Psoas muscle (tissue), 8 donors: ENCODE measurements at regions of chr14 and their contacts with region 1.

Region 1: DNA sequence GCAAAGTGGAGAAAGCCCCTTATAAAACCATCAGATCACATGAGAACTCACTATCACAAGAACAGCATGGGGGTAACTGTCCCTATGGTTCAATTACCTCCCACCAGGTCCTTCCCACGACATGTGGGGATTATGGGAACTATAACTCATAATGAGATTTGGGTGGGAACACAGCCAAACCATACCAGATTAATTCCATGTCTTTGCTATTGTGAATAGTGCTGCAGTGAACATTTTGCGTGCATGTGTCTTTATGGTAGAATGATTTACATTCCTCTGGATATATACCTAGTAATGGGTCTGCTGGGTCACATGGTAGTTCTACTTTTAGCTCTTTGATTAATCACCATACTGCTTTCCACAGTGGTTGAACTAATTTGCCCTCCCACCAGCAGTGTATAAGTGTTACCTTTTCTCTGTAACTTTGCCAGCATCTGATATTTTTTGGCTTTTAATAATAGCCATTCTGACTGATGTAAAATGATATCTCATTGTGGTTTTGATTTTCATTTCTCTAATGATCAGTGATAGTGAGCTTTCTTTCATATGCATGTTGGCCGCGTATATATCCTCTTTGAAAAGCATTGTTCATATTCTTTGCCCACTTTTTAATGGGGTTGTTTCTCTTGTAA is 29.7 kb upstream of the SAV1 start:
- DNase-seq: no peak
- ATAC-seq: no peak
- H3K4me3 ChIP-seq: no peak overlapping the region
- H3K27ac ChIP-seq: no peak overlapping the region
- H3K4me1 ChIP-seq: no peaks in the 10 kb centered on the region
- H3K27me3 ChIP-seq: no peaks in the 10 kb centered on the region
- CTCF ChIP-seq: no peak

Region 2: GRCh38 chr14:50612806-50613205 is 85.0 kb before region 1 on chr14:
- intact Hi-C with region 1: loop called in 1 of 2 experiments (anchors 5 kb)
- DNase-seq: no peak
- ATAC-seq: no peak
- H3K4me3 ChIP-seq: no peak overlapping the region
- H3K27ac ChIP-seq: no peak overlapping the region
- H3K4me1 ChIP-seq: no peaks in the 10 kb centered on the region
- H3K27me3 ChIP-seq: no peaks in the 10 kb centered on the region
- CTCF ChIP-seq: no peak

Region 3: DNA sequence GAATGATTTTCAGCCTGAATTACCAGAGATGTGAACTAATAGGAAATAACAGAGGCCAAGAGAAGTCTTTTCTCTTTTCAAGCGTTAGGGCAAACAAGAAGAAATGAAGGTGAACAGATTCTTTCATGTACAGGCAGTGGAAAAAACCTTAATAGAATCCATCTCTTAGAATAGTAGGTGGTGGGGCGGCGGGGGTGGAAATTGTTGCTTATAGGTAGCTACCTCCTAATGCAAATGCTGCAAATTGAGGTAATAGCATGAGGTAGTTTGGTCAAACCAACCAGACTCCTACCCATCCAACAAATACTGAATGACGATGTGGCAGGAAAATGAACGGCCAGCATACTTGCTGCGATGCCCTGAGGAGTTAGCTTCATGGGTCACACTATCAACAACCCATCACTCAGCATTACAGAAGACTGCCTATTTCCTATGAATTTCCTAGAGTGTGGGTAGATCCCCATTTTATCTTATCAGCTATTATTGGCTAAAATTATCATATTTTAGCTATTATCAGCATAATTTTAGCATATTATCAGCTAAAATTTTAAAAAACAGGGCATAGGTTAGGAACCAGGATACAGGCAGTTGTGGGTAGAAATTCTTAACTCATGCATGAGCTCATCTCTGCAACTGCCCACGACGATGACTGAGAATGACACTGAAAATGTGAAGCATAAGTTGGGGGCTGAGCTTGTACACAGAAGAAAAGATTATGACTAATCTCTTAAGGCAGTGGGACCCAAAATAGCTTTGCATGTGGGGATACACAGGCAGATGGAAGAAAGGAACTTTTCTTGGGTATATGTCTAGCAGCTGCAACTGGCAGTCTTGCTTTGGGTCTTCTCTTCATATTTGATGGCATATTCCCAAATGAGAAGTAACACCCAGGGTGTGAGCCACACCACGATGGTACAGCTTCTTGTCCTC is 64.5 kb after region 1 on chr14:
- intact Hi-C with region 1: no loop called
- DNase-seq: no peak
- ATAC-seq: no peak
- H3K4me3 ChIP-seq: no peak overlapping the region
- H3K27ac ChIP-seq: peak overlapping the region; percentile 30
- H3K4me1 ChIP-seq: peaks cover 5% of the 10 kb centered on the region
- H3K27me3 ChIP-seq: no peaks in the 10 kb centered on the region
- CTCF ChIP-seq: no peak